HepG2 (cell line): ENCODE measurements at regions of chr10 and their contacts with region 1.

Region 1: DNA sequence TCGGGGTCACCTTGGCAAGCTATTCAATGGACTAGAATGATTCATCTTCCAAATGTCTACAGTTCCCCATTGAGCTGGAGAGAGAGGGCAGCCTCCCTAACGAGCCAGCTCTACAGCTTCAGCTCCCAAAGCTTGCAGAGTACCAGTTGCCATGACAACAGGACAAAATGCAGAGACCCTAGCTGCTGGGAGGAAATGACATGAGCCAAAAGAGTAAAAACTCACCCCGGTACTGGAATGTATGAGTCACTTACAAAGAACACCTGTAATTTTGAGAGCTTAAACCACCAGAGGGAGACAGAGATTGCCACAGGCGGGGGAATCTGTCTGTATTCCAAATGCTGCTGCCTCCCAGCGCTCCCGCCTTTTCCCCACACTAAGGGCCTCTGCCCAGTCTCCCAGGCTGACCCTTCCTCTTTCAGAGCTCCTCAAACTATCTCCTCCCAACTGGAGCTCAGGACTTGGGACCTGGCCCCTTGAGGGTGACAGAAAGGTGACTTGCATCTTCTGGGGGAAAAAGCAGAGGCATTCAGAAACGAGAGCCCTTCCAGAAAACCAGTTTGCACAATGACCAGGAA is 95.5 kb downstream of the CUL2 start:
- DNase-seq: peak; percentile 79
- ATAC-seq: peak; percentile 90
- H3K4me3 ChIP-seq: peak overlapping the region in 1 of 3 experiments; percentile 37; a peak in 2 of 6 replicates
- H3K27ac ChIP-seq: no peak overlapping the region
- H3K4me1 ChIP-seq: peaks cover 12% of the 10 kb centered on the region
- H3K27me3 ChIP-seq: no peaks in the 10 kb centered on the region
- CTCF ChIP-seq: peak; percentile 83
- EP300 ChIP-seq: no peak
- POLR2A ChIP-seq: no peak
- RAD21 ChIP-seq: peak; percentile 71

Region 2: GRCh38 chr10:35027567-35027966 is 32.9 kb after region 1 on chr10:
- CTCF ChIA-PET with region 1: interaction called, 3 read pairs
- POLR2A ChIA-PET with region 1: no interaction called
- in situ Hi-C with region 1: no loop called
- intact Hi-C with region 1: loop called (anchors 1 kb)
- DNase-seq: peak; percentile 12
- ATAC-seq: no peak
- H3K4me3 ChIP-seq: no peak overlapping the region
- H3K27ac ChIP-seq: no peak overlapping the region
- H3K4me1 ChIP-seq: no peaks in the 10 kb centered on the region
- H3K27me3 ChIP-seq: no peaks in the 10 kb centered on the region
- CTCF ChIP-seq: no peak
- EP300 ChIP-seq: no peak
- POLR2A ChIP-seq: no peak
- RAD21 ChIP-seq: no peak

Region 3: DNA sequence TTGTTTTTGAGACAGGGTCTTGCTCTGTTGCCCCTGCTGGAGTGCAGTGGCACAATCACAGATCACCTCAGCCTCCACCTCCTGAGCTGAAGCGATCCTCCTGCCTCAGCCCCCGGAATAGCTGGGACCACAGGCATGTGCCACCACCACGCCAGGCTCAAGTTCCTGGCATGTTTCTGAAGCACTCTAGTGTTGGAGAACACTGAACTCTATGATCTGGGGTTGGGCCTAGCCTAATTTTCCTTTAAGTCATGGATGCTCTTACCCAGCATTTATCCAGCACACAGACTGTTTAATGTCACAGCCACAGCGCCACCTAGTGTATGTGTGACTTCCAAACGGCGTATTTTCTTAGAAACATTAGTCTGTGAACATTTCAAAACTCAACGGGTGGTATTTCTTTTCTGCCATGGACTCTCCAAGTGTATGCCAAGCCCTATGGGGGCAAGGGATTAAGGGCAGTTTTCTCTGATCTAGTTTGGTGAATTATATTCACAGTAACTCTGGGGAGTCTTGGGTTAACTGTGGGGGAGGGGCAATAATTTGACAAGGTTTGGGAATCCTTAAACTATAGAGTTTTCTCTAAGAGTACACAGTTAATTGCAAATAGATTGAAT is 223.8 kb after region 1 on chr10:
- CTCF ChIA-PET with region 1: no interaction called
- POLR2A ChIA-PET with region 1: no interaction called
- in situ Hi-C with region 1: no loop called
- intact Hi-C with region 1: loop called (anchors 5 kb)
- DNase-seq: peak; percentile 77
- ATAC-seq: peak; percentile 62
- H3K4me3 ChIP-seq: no peak overlapping the region
- H3K27ac ChIP-seq: no peak overlapping the region
- H3K4me1 ChIP-seq: peaks cover 61% of the 10 kb centered on the region
- H3K27me3 ChIP-seq: no peaks in the 10 kb centered on the region
- CTCF ChIP-seq: peak; percentile 83
- EP300 ChIP-seq: no peak
- POLR2A ChIP-seq: no peak
- RAD21 ChIP-seq: peak; percentile 45; the same call in 1 of the 2 replicates